Activated CD8-positive, alpha-beta T cell treated with anti-CD3 and anti-CD28 coated beads for 36 hours (primary cell): ENCODE measurements at regions of chr3 and their contacts with region 1.

Region 1: GRCh38 chr3:4978204-4978965 is 852 bp upstream of the BHLHE40 start:
- DNase-seq: peak; percentile 98
- ATAC-seq: peak; percentile 57
- H3K4me3 Mint-ChIP-seq: peak overlapping the region; percentile 92
- H3K27ac Mint-ChIP-seq: peak overlapping the region; percentile 96
- H3K4me1 Mint-ChIP-seq: peaks cover 34% of the 10 kb centered on the region
- H3K27me3 Mint-ChIP-seq: no peaks in the 10 kb centered on the region
- CTCF ChIP-seq: no peak

Region 2: GRCh38 chr3:4736284-4736861 is 242.0 kb before region 1 on chr3:
- CTCF ChIA-PET with region 1: interaction called, 8 read pairs
- POLR2A ChIA-PET with region 1: interaction called, 6 read pairs
- intact Hi-C with region 1: loop called (anchors 5 kb)
- DNase-seq: no peak
- ATAC-seq: no peak
- H3K4me3 Mint-ChIP-seq: no peak overlapping the region
- H3K27ac Mint-ChIP-seq: peak overlapping the region; percentile 91
- H3K4me1 Mint-ChIP-seq: peaks cover 77% of the 10 kb centered on the region
- H3K27me3 Mint-ChIP-seq: no peaks in the 10 kb centered on the region
- CTCF ChIP-seq: no peak

Region 3: GRCh38 chr3:4845882-4846281 is 132.5 kb before region 1 on chr3:
- CTCF ChIA-PET with region 1: interaction called, 26 read pairs
- POLR2A ChIA-PET with region 1: interaction called, 434 read pairs
- intact Hi-C with region 1: loop called (anchors 1 kb)
- DNase-seq: no peak
- ATAC-seq: peak; percentile 56
- H3K4me3 Mint-ChIP-seq: peak overlapping the region; percentile 3
- H3K27ac Mint-ChIP-seq: peak overlapping the region; percentile 99
- H3K4me1 Mint-ChIP-seq: peaks cover 99% of the 10 kb centered on the region
- H3K27me3 Mint-ChIP-seq: no peaks in the 10 kb centered on the region
- CTCF ChIP-seq: no peak

Region 4: DNA sequence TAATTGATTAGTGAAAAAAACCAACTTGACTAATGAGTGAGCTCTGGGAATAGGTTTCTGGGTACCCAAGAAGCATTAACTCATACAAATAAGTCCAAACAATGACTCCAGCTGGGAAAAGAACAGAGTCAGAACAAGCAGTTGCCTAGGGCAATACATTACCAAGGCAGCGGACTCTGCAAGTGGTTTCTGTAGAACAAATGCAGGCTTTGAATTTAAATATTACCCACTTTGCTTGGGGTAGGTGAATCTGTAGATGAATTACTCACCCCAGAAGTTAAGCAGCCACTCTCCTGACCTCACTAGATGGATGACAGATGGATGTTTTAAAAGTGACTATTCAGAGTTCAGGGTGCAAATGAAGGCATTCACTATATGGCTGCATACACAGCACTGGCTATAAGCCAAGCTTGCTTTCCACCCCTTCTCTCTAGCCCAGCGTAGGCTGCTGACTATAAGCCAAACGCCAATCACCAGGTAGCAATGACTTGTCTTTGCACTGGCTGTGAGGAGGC is 72.2 kb before region 1 on chr3:
- CTCF ChIA-PET with region 1: interaction called, 7 read pairs
- POLR2A ChIA-PET with region 1: interaction called, 9 read pairs
- intact Hi-C with region 1: loop called (anchors 5 kb)
- DNase-seq: peak; percentile 35
- ATAC-seq: peak; percentile 73
- H3K4me3 Mint-ChIP-seq: no peak overlapping the region
- H3K27ac Mint-ChIP-seq: no peak overlapping the region
- H3K4me1 Mint-ChIP-seq: peaks cover 68% of the 10 kb centered on the region
- H3K27me3 Mint-ChIP-seq: no peaks in the 10 kb centered on the region
- CTCF ChIP-seq: no peak

Region 5: GRCh38 chr3:5016218-5017161 is 38.1 kb after region 1 on chr3:
- CTCF ChIA-PET with region 1: interaction called, 110 read pairs
- POLR2A ChIA-PET with region 1: interaction called, 276 read pairs
- intact Hi-C with region 1: loop called (anchors 5 kb)
- DNase-seq: peak; percentile 60
- ATAC-seq: peak; percentile 54
- H3K4me3 Mint-ChIP-seq: no peak overlapping the region
- H3K27ac Mint-ChIP-seq: peak overlapping the region; percentile 11
- H3K4me1 Mint-ChIP-seq: peaks cover 75% of the 10 kb centered on the region
- H3K27me3 Mint-ChIP-seq: peaks cover 2% of the 10 kb centered on the region
- CTCF ChIP-seq: no peak

Region 6: GRCh38 chr3:5194341-5195159 is 216.2 kb after region 1 on chr3:
- CTCF ChIA-PET with region 1: no interaction called
- POLR2A ChIA-PET with region 1: interaction called, 13 read pairs
- intact Hi-C with region 1: loop called (anchors 5 kb)
- DNase-seq: peak; percentile 68
- ATAC-seq: peak; percentile 52
- H3K4me3 Mint-ChIP-seq: peak overlapping the region; percentile 28
- H3K27ac Mint-ChIP-seq: peak overlapping the region; percentile 93
- H3K4me1 Mint-ChIP-seq: peaks cover 80% of the 10 kb centered on the region
- H3K27me3 Mint-ChIP-seq: no peaks in the 10 kb centered on the region
- CTCF ChIP-seq: no peak